Breast epithelium (tissue), 4 donors: ENCODE measurements at regions of chr19 and their contacts with region 1.

Region 1: GRCh38 chr19:4174895-4175668 is 7.3 kb downstream of the SIRT6 start:
- DNase-seq: no peak
- H3K4me3 ChIP-seq: no peak overlapping the region
- H3K27ac ChIP-seq: no peak overlapping the region
- H3K4me1 ChIP-seq: no peaks in the 10 kb centered on the region
- H3K27me3 ChIP-seq: peaks cover 0 to 9% of the 10 kb centered on the region in 2 donors
- CTCF ChIP-seq: no peak
- POLR2A ChIP-seq: no peak

Region 2: GRCh38 chr19:4108767-4109625 is 66.1 kb before region 1 on chr19:
- intact Hi-C with region 1: loop called (anchors 2 kb)
- DNase-seq: no peak
- H3K4me3 ChIP-seq: no peak overlapping the region
- H3K27ac ChIP-seq: no peak overlapping the region
- H3K4me1 ChIP-seq: no peaks in the 10 kb centered on the region
- H3K27me3 ChIP-seq: no peaks in the 10 kb centered on the region
- CTCF ChIP-seq: no peak
- POLR2A ChIP-seq: no peak

Region 3: GRCh38 chr19:6161271-6161850 is 1986.3 kb after region 1 on chr19:
- intact Hi-C with region 1: loop called (anchors 5 kb)
- DNase-seq: no peak
- H3K4me3 ChIP-seq: no peak overlapping the region
- H3K27ac ChIP-seq: no peak overlapping the region
- H3K4me1 ChIP-seq: no peaks in the 10 kb centered on the region
- H3K27me3 ChIP-seq: no peaks in the 10 kb centered on the region
- CTCF ChIP-seq: no peak
- POLR2A ChIP-seq: no peak